ENCODE measurements at regions of chr1 and their contacts with region 1.

Region 1: GRCh38 chr1:26771643-26772321 is 16.0 kb upstream of the PIGV start:
- DNase-seq: no peak
- ATAC-seq: peak in 3 of 4 donors; percentile 60 to 80 (median 71)
- H3K4me3 ChIP-seq: no peak overlapping the region
- H3K27ac ChIP-seq: peak overlapping the region in 2 of 4 donors; percentile 7 to 34
- H3K4me1 ChIP-seq: peaks cover 0 to 14% (median 0%) of the 10 kb centered on the region in 3 donors
- H3K27me3 ChIP-seq: no peaks in the 10 kb centered on the region
- CTCF ChIP-seq: no peak

Region 2: DNA sequence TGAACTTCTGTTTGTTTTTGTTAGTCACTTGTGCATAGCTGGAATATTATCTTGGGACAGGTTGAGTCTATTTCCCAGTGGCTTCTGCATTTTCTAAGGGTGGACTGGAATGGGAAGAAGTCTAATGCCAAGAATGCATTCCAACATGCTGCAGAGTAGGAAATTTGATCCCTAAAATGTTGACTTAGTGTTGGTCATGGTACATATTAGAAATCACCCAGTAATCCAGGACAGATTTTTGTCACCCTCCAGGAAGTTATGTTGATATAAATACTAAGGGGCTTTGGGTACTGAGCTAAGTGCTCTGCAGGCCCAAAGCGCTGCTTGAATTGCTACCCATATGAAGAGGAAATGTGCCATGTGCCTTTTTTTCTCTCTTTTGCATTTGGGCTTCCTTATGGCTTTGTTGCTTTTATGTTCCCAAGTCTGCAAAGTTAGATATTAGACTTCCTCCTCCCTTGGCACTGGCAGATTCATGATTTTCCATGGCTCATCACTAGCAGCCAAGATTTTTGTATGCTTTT is 65.9 kb before region 1 on chr1:
- intact Hi-C with region 1: loop called in 1 of 3 experiments (anchors 10 kb)
- DNase-seq: no peak
- ATAC-seq: peak; percentile 62 to 80 (median 72)
- H3K4me3 ChIP-seq: no peak overlapping the region
- H3K27ac ChIP-seq: peak overlapping the region; percentile 19 to 77 (median 60)
- H3K4me1 ChIP-seq: peaks cover 29 to 65% (median 53%) of the 10 kb centered on the region in 3 donors
- H3K27me3 ChIP-seq: no peaks in the 10 kb centered on the region
- CTCF ChIP-seq: no peak

Region 3: GRCh38 chr1:26826261-26827105 is 54.7 kb after region 1 on chr1 and contains the start of gene ZDHHC18:
- intact Hi-C with region 1: no loop called
- DNase-seq: peak; percentile 61 to 90 (median 79)
- ATAC-seq: peak; percentile 91 to 96 (median 92)
- H3K4me3 ChIP-seq: peak within 1 kb of the TSS; percentile 39 to 70 (median 58)
- H3K27ac ChIP-seq: peak within 1 kb of the TSS; percentile 42 to 78 (median 59)
- H3K4me1 ChIP-seq: peaks cover 0 to 12% (median 5%) of the 10 kb centered on the region in 3 donors
- H3K27me3 ChIP-seq: no peaks in the 10 kb centered on the region
- CTCF ChIP-seq: peak in 3 of 4 donors; percentile 20 to 21 (median 20)
- total RNA-seq, gene ZDHHC18: 3.4 to 9.9 (median 5.4) TPM